BJ (cell line): ENCODE measurements at regions of chr4 and their contacts with region 1.

Region 1: GRCh38 chr4:169612871-169613859 is 782 bp upstream of the NEK1 start:
- DNase-seq: no peak
- H3K4me3 ChIP-seq: peak overlapping the region; percentile 85
- H3K27me3 ChIP-seq: no peaks in the 10 kb centered on the region
- CTCF ChIP-seq: peak; percentile 79

Region 2: GRCh38 chr4:169540774-169541173 is 72.4 kb before region 1 on chr4:
- CTCF ChIA-PET with region 1: no interaction called
- POLR2A ChIA-PET with region 1: no interaction called
- DNase-seq: no peak
- H3K4me3 ChIP-seq: no peak overlapping the region
- H3K27me3 ChIP-seq: no peaks in the 10 kb centered on the region
- CTCF ChIP-seq: no peak

Region 3: DNA sequence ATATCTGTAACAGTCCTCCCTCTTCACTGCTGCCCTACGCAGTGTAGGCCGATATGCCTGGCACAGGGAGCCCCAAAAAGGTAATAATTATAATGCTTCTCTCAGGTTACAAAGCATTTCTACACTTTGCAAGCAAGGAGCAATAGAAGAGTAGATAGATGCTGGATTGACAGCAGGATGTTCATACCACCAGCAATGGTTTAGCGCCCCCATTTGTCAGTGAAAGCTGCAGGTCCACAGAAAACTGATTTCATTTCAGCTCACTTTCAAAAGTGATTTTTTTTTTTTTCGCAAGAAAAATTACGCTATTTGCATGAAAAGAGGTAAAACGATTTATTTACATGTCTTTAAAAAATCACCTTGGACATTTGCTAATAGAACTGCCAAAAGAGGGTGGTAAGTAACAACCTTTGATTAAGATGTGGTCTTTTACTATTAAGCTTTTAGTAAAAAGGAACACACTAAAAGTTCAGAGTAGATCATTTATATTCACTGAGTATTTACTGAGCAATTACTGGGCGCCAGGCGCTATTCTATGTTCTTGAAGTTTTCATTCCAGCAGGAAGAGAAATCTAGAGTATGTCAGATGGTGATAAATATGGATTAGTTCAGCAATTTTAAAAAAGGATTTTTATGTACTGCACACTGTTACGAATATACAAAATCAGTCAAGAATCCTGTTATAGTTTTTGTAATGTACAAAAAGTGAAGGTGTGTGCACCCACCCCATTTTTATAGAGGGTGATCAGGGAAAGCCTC is 110.2 kb after region 1 on chr4:
- CTCF ChIA-PET with region 1: interaction called, 13 read pairs
- POLR2A ChIA-PET with region 1: no interaction called
- DNase-seq: no peak
- H3K4me3 ChIP-seq: no peak overlapping the region
- H3K27me3 ChIP-seq: no peaks in the 10 kb centered on the region
- CTCF ChIP-seq: 0 out of 2 replicates have a peak, but pooled peaks have one; percentile 24

Region 4: GRCh38 chr4:169757575-169758184 is 144.5 kb after region 1 on chr4 and contains the start of gene HPF1:
- CTCF ChIA-PET with region 1: interaction called, 11 read pairs
- POLR2A ChIA-PET with region 1: no interaction called
- DNase-seq: no peak
- H3K4me3 ChIP-seq: peak within 1 kb of the TSS; percentile 50
- H3K27me3 ChIP-seq: no peaks in the 10 kb centered on the region; the same call in 1 of the 2 replicates
- CTCF ChIP-seq: 0 out of 2 replicates have a peak, but pooled peaks have one; percentile 1
- polyA plus RNA-seq, gene HPF1: 6.4 and 20.1 TPM in 2 replicates

Region 5: GRCh38 chr4:169791527-169792156 is 178.5 kb after region 1 on chr4:
- CTCF ChIA-PET with region 1: interaction called, 15 read pairs
- POLR2A ChIA-PET with region 1: no interaction called
- DNase-seq: no peak
- H3K4me3 ChIP-seq: peak overlapping the region; percentile 32
- H3K27me3 ChIP-seq: peaks cover 2% of the 10 kb centered on the region; the same call in 1 of the 2 replicates
- CTCF ChIP-seq: peak; percentile 72

Region 6: DNA sequence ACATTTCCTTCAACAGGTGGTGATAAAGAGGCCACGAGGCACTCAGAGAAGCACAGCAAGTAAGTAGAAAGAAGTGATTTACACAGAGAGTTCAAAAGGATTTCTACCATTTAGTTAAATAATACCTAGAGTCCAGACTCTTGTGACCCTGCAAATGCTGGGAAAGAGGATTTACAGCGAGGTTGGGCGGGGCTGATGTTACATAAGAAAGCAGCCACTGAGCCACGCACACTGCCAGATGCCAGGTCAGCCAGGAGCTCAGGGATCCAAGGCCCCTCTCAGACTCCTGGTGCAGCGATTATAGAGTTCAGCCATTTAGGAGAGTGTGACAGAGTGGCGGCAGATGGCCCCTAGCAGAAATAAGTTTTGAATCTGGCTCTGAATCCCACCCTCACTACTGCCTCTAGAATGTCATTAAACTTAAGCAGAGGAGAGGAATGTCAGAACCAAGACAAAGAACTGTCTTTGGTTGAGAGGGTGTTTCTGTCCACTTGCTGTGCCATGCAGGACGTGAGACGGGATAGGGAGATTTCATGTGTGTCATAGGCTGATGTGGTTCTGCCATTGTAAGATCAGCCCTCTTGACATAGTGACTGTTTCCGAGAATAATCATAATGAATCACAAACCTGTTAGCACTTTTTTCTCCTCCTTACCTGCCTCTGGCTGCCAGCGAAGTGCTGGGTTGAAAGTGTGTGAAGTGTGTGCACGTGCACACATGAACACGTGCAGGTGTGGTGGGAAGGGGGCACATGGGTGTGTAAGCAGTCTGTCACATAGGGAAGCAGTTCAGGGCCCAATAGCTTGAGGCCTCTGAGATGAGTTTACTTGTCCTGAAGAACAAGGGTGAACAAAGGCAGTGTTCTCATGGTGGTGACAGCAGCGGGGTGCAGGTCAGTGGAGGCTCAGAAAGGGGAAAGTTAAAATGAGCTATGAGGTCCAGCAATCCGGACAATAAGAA is 363.0 kb after region 1 on chr4:
- CTCF ChIA-PET with region 1: no interaction called
- POLR2A ChIA-PET with region 1: no interaction called
- DNase-seq: no peak
- H3K4me3 ChIP-seq: no peak overlapping the region
- H3K27me3 ChIP-seq: no peaks in the 10 kb centered on the region
- CTCF ChIP-seq: no peak

Region 7: GRCh38 chr4:170025523-170026252 is 412.5 kb after region 1 on chr4:
- CTCF ChIA-PET with region 1: no interaction called
- POLR2A ChIA-PET with region 1: no interaction called
- DNase-seq: no peak
- H3K4me3 ChIP-seq: peak overlapping the region; percentile 67
- H3K27me3 ChIP-seq: peaks cover 6% of the 10 kb centered on the region
- CTCF ChIP-seq: no peak